ENCODE measurements at regions of chr2 and their contacts with region 1.

Region 1: GRCh38 chr2:150710916-150711315 is 223.4 kb upstream of the RND3 start:
- DNase-seq: no peak
- H3K4me3 ChIP-seq: no peak overlapping the region
- H3K27ac ChIP-seq: no peak overlapping the region
- H3K4me1 ChIP-seq: peaks cover 1% of the 10 kb centered on the region
- H3K27me3 ChIP-seq: no peaks in the 10 kb centered on the region
- CTCF ChIP-seq: no peak
- POLR2A ChIP-seq: no peak

Region 2: DNA sequence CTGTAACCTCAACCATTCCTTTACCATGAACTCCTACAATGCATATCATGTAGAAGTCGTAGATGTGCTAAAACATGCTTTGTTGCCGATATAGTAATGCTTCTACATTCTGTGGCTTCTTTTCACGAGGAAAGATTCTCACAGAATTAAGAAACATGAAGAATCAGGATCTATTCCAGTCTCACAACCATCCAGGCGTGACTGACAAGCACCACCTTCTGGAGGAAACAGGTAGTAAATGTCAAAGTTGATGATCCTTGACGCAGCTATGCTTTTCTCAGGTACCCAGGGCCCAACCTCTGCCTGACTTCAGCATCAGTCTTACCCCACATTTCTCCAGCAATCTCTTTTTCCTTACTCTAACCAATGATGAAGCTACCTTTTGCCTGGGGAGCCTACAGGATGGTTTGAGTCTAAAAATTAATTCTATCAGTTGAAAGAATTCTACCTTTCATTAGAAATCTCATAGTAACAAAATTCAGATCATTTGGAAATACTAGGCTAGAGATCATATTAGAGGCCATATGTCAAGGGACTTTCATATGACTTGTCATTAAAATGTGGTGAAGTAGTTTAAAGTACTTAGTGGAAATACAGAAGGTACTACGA is 100.1 kb before region 1 on chr2:
- CTCF ChIA-PET with region 1: no interaction called
- POLR2A ChIA-PET with region 1: no interaction called
- dilution Hi-C with region 1: no loop called
- intact Hi-C with region 1: no loop called
- DNase-seq: peak; percentile 45
- H3K4me3 ChIP-seq: no peak overlapping the region
- H3K27ac ChIP-seq: no peak overlapping the region
- H3K4me1 ChIP-seq: peaks cover 8% of the 10 kb centered on the region
- H3K27me3 ChIP-seq: no peaks in the 10 kb centered on the region
- CTCF ChIP-seq: peak; percentile 31 to 34
- POLR2A ChIP-seq: no peak

Region 3: GRCh38 chr2:151007365-151007764 is 296.4 kb after region 1 on chr2:
- CTCF ChIA-PET with region 1: no interaction called
- POLR2A ChIA-PET with region 1: no interaction called
- dilution Hi-C with region 1: no loop called
- intact Hi-C with region 1: loop called (anchors 10 kb)
- DNase-seq: no peak
- H3K4me3 ChIP-seq: no peak overlapping the region
- H3K27ac ChIP-seq: no peak overlapping the region
- H3K4me1 ChIP-seq: no peaks in the 10 kb centered on the region
- H3K27me3 ChIP-seq: no peaks in the 10 kb centered on the region
- CTCF ChIP-seq: no peak
- POLR2A ChIP-seq: no peak